Dorsolateral prefrontal cortex (tissue), 120 donors: ENCODE measurements at regions of chr15 and their contacts with region 1.

Region 1: GRCh38 chr15:33374226-33374914 is 63.6 kb downstream of the RYR3 start:
- DNase-seq: peak in 1 of 10 donors; percentile 47
- H3K4me3 ChIP-seq: no peak overlapping the region
- H3K27ac ChIP-seq: no peak overlapping the region
- H3K27me3 ChIP-seq: no peaks in the 10 kb centered on the region
- CTCF ChIP-seq: no peak

Region 2: GRCh38 chr15:33322091-33322490 is 52.3 kb before region 1 on chr15:
- intact Hi-C with region 1: loop called in 1 of 2 experiments (anchors 5 kb)
- DNase-seq: no peak
- H3K4me3 ChIP-seq: no peak overlapping the region
- H3K27ac ChIP-seq: no peak overlapping the region
- H3K27me3 ChIP-seq: peaks cover 0 to 4% (median 0%) of the 10 kb centered on the region in 45 donors
- CTCF ChIP-seq: no peak